Aorta (tissue), 5 donors: ENCODE measurements at regions of chr11 and their contacts with region 1.

Region 1: GRCh38 chr11:78645226-78646202 is 70.8 kb upstream of the NARS2 start:
- DNase-seq: peak; percentile 69 to 88
- ATAC-seq: peak; percentile 87
- H3K4me3 ChIP-seq: no peak overlapping the region
- H3K27ac ChIP-seq: no peak overlapping the region
- H3K4me1 ChIP-seq: no peaks in the 10 kb centered on the region
- H3K27me3 ChIP-seq: no peaks in the 10 kb centered on the region

Region 2: GRCh38 chr11:78630561-78631303 is 14.8 kb before region 1 on chr11:
- intact Hi-C with region 1: no loop called
- DNase-seq: no peak
- ATAC-seq: no peak
- H3K4me3 ChIP-seq: no peak overlapping the region
- H3K27ac ChIP-seq: no peak overlapping the region
- H3K4me1 ChIP-seq: no peaks in the 10 kb centered on the region
- H3K27me3 ChIP-seq: peaks cover 0 to 2% of the 10 kb centered on the region in 2 donors

Region 3: DNA sequence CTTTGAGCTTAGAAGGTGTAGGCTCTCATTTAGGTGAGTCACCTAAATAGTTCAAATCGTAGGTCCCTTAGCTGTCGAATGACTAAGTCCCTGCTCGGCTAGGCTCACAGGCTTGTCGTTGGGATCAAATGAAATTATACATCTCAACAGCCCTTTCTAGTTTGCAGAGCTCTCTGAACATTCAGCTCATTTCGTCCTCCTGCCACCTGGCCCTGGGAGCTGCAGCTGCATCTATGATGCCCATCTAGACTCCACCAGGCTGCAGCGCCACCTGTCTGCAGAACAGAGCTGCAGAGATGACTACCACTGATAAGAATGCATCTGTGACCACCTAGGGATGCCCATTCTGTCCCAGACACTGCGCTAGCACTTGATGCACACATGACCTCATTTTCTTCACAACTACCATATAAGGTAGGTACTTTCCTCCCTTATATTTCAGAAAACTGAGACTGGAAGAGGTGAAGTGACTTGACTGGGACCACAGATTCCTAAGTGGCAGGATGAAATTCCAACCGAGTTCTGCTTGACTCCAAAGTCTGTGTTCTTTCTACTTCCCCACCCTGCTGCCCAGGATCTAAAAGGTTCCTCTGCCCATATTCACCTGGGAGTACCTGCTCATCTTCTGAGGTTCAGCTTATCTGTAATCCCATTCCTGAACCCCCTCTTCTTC is 70.3 kb after region 1 on chr11:
- intact Hi-C with region 1: loop called (anchors 1 to 2 kb)
- DNase-seq: peak; percentile 75 to 89
- ATAC-seq: peak; percentile 75
- H3K4me3 ChIP-seq: no peak overlapping the region
- H3K27ac ChIP-seq: no peak overlapping the region
- H3K4me1 ChIP-seq: no peaks in the 10 kb centered on the region
- H3K27me3 ChIP-seq: no peaks in the 10 kb centered on the region

Region 4: DNA sequence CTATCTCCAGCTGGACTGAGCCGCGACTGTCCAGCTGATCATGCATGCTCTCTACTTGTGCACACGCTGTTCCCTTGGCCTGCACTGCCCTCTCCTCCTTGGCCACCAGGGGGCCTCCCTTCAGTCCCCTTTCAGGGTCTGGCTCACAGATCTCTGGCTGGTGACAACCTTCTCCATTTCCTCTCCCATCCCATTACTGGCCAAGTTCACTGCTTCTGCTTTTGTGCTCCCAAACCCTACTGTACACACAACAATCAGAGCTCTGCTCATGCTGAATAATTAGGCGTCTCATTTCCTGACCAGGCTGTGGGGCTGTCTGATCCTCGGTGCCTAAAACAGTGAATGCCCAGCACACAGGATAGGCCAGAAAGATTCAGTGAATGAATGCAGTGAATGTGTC is 153.1 kb after region 1 on chr11:
- intact Hi-C with region 1: loop called in 1 of 2 experiments (anchors 10 kb)
- DNase-seq: peak; percentile 89 to 90
- ATAC-seq: peak; percentile 75
- H3K4me3 ChIP-seq: no peak overlapping the region
- H3K27ac ChIP-seq: no peak overlapping the region
- H3K4me1 ChIP-seq: peaks cover 0 to 6% of the 10 kb centered on the region in 2 donors
- H3K27me3 ChIP-seq: no peaks in the 10 kb centered on the region

Region 5: GRCh38 chr11:79076526-79077115 is 431.1 kb after region 1 on chr11:
- intact Hi-C with region 1: loop called (anchors 5 to 10 kb)
- DNase-seq: peak; percentile 71 to 78
- ATAC-seq: no peak
- H3K4me3 ChIP-seq: no peak overlapping the region
- H3K27ac ChIP-seq: no peak overlapping the region
- H3K4me1 ChIP-seq: no peaks in the 10 kb centered on the region
- H3K27me3 ChIP-seq: no peaks in the 10 kb centered on the region

Region 6: DNA sequence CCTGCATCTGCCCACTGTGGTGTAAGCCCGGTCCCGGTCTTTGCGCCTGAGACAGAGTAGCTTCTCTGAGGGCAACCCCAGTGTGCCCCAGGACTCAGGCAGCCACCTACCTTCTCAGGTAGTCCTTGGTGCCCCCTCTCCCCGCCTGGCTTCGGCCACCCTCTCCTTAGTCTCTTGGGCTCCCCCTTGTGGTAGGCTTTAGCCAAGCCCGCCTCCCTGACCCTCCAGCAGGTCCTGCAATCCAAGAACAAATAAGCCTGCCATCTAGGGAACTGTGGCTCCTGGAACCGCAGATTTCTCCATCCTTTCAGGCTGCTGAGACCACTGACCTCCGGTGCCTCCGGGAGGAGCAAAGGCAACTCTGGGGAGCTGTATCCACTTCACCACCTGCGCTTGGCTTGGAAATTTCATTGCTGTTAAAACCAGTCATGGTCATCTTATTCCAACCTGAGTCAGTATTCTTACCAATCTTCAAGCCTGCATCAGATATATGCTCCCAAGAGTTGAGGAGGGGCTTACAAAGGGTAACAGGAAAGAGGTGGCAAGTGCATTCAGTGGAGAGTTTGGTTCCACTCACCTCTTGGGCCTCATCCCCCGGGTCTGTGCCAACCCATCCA is 848.1 kb after region 1 on chr11:
- intact Hi-C with region 1: loop called in 1 of 2 experiments (anchors 10 kb)
- DNase-seq: peak; percentile 70 to 86
- ATAC-seq: peak; percentile 79
- H3K4me3 ChIP-seq: no peak overlapping the region
- H3K27ac ChIP-seq: no peak overlapping the region
- H3K4me1 ChIP-seq: no peaks in the 10 kb centered on the region
- H3K27me3 ChIP-seq: no peaks in the 10 kb centered on the region